ENCODE measurements at regions of chr1 and their contacts with region 1.

Region 1: GRCh38 chr1:108897865-108898720 is 21.3 kb downstream of the GPSM2 start:
- DNase-seq: peak; percentile 31
- H3K4me3 ChIP-seq: no peak overlapping the region
- CTCF ChIP-seq: peak; percentile 46

Region 2: DNA sequence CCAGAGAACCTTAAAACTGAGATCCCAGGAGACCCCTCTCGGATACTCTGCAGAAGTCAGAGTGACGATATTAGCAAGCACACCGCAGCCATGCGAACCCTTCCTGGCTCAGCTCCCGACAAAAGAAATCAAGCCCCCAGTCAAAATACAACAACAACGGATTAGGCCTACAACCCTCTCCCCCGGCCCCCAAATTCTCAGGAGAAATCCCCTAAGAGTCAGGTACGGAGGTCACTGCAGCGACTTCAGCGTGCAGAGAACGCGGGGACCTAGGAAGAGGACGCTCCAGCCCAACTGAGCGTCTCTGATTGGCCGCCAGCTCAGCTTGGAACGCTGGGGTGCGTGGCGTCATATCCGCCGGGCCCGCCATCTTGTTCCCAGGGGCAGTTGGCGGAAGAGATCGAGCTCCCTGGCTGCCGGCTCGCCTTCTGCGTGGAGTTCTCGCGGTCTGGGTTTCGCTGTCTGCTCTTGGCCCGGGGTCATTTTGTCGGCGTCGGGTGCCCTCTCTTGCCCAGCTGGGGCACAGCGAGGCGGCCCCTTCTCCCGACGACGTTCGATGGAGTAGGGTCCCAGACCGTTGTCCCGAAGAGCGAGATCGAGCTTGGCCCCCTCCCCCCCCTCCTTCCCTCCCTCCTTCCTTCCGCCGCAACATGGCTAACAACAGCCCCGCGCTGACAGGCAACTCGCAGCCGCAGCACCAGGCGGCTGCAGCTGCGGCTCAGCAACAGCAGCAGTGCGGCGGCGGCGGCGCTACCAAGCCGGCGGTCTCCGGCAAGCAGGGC is 206.0 kb before region 1 on chr1 and contains the start of gene PRPF38B:
- CTCF ChIA-PET with region 1: interaction called, 10 read pairs
- POLR2A ChIA-PET with region 1: interaction called, 5 read pairs
- DNase-seq: no peak
- H3K4me3 ChIP-seq: peak within 1 kb of the TSS; percentile 85
- CTCF ChIP-seq: no peak

Region 3: GRCh38 chr1:108801101-108801500 is 97.0 kb before region 1 on chr1:
- CTCF ChIA-PET with region 1: interaction called, 15 read pairs
- POLR2A ChIA-PET with region 1: no interaction called
- DNase-seq: no peak
- H3K4me3 ChIP-seq: no peak overlapping the region
- CTCF ChIP-seq: no peak

Region 4: GRCh38 chr1:108828022-108828961 is 69.8 kb before region 1 on chr1:
- CTCF ChIA-PET with region 1: interaction called, 540 read pairs
- POLR2A ChIA-PET with region 1: interaction called, 3 read pairs
- DNase-seq: no peak
- H3K4me3 ChIP-seq: no peak overlapping the region
- CTCF ChIP-seq: peak; percentile 77

Region 5: GRCh38 chr1:109438798-109439297 is 540.8 kb after region 1 on chr1:
- CTCF ChIA-PET with region 1: no interaction called
- POLR2A ChIA-PET with region 1: no interaction called
- DNase-seq: peak; percentile 83
- H3K4me3 ChIP-seq: no peak overlapping the region
- CTCF ChIP-seq: no peak